ENCODE measurements at regions of chr3 and their contacts with region 1.

Region 1: GRCh38 chr3:58414538-58415197 is 19.0 kb downstream of the PDHB start:
- DNase-seq: peak; percentile 67
- ATAC-seq: peak; percentile 84
- H3K4me3 ChIP-seq: no peak overlapping the region
- H3K27ac ChIP-seq: no peak overlapping the region
- H3K4me1 ChIP-seq: peaks cover 4% of the 10 kb centered on the region
- H3K27me3 ChIP-seq: no peaks in the 10 kb centered on the region
- CTCF ChIP-seq: peak; percentile 84
- POLR2A ChIP-seq: no peak
- RAD21 ChIP-seq: peak; percentile 83

Region 2: DNA sequence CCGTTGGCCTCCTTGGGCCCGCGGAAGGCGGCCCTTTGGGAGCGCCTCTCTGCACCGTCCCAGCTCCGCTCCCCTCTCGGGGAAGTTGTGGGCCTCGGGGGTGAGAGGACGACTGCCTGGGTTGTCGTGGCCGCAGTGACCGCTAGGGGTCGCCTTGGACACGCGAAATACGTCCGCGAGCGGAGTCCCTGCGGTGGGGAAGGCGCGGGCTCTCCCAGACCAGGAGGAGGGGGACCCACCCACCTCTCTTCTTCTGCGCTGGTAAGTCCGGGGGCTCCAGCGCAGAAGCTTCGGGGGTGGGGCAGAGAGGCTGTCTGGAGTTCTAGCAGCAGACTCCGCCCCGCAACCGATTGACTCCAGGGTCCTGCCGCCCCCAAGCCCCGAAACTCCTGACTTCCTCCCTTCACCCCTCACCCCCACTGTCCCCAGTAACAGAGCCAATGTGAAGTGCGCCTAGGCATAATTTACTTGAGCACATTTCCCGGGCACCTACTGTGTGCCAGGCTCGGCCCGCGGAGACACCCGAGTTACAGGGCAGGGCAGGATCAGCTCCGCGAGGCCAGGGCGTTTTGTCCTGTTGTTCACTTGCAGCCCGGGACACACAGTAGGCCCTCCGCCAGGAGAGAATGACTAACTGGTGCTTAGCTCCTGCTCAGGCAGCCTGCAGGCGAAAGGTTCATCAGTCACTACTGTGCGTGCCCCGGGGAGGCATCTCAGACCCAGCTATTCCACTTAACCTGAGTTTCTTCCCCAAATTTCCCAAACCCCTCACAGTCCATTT is 236.7 kb before region 1 on chr3:
- CTCF ChIA-PET with region 1: no interaction called
- POLR2A ChIA-PET with region 1: no interaction called
- dilution Hi-C with region 1: no loop called
- in situ Hi-C with region 1: loop called (anchors 25 kb)
- intact Hi-C with region 1: no loop called
- DNase-seq: peak; percentile 69
- ATAC-seq: peak; percentile 92
- H3K4me3 ChIP-seq: peak overlapping the region; percentile 24
- H3K27ac ChIP-seq: no peak overlapping the region
- H3K4me1 ChIP-seq: peaks cover 7% of the 10 kb centered on the region
- H3K27me3 ChIP-seq: peaks cover 8% of the 10 kb centered on the region; the same call in 1 of the 2 replicates
- CTCF ChIP-seq: peak; percentile 87
- POLR2A ChIP-seq: no peak
- RAD21 ChIP-seq: peak; percentile 71

Region 3: GRCh38 chr3:58188173-58188564 is 226.5 kb before region 1 on chr3:
- CTCF ChIA-PET with region 1: no interaction called
- POLR2A ChIA-PET with region 1: no interaction called
- dilution Hi-C with region 1: no loop called
- in situ Hi-C with region 1: loop called (anchors 25 kb)
- intact Hi-C with region 1: loop called (anchors 5 kb)
- DNase-seq: no peak
- ATAC-seq: no peak; the same call in 1 of the 2 replicates
- H3K4me3 ChIP-seq: no peak overlapping the region
- H3K27ac ChIP-seq: no peak overlapping the region
- H3K4me1 ChIP-seq: no peaks in the 10 kb centered on the region
- H3K27me3 ChIP-seq: peaks cover 6% of the 10 kb centered on the region
- CTCF ChIP-seq: no peak
- POLR2A ChIP-seq: no peak
- RAD21 ChIP-seq: no peak

Region 4: DNA sequence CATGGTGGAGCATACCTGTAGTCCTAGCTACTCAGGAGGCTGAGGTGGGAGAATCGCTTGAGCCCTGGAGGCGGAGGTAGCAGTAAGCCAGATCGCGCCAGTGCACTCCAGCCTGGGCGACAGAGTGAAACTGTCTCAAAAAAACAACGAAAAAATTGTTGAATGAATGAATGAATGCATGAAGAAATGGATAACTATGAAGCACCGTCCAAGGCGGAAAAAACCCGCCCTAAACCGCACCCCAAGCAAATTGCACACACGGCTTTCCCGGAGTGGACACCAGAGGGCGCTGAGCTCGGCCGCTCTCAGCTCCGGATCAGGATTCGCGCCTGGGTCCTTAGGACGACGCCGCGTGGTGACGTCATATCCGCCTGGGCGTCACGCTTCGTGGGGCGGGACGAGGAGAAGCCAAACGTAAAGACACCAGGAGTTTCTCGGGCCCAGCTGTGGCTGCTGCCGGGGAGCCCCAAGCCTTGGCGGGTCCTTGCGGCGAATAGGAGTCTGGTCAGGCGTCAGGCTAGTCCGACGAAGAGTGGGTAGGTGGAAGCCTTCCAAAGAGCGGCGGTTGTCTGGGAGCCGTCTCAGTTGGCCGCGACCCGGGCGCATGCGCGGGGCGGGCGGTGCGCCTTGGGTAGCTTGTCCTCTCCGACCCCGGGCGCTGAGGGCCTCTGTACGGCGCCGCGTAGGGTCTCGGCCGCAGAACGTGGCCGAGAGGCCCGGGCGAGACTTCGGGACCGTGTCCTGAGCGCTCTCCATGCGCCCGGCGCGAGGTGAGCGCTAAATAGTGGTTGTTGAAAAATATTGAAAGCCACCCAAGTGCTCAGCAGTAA is 108.6 kb before region 1 on chr3 and contains the starts of genes HTD2 and RPP14:
- CTCF ChIA-PET with region 1: interaction called, 7 read pairs
- POLR2A ChIA-PET with region 1: no interaction called
- dilution Hi-C with region 1: no loop called
- in situ Hi-C with region 1: no loop called
- intact Hi-C with region 1: loop called (anchors 1 kb)
- DNase-seq: peak; percentile 97
- ATAC-seq: peak; percentile 92
- H3K4me3 ChIP-seq: peak within 1 kb of the TSS; percentile 74
- H3K27ac ChIP-seq: peak within 1 kb of the TSS; percentile 94
- H3K4me1 ChIP-seq: peaks cover 6% of the 10 kb centered on the region
- H3K27me3 ChIP-seq: peaks cover 9% of the 10 kb centered on the region
- CTCF ChIP-seq: peak; percentile 98
- POLR2A ChIP-seq: peak; percentile 92
- RAD21 ChIP-seq: peak; percentile 42
- total RNA-seq, gene HTD2: 11.4 and 13.3 TPM in 2 replicates
- total RNA-seq, gene RPP14: 6.6 and 11.9 TPM in 2 replicates

Region 5: GRCh38 chr3:58324391-58325390 is 90.0 kb before region 1 on chr3:
- CTCF ChIA-PET with region 1: interaction called, 7 read pairs
- POLR2A ChIA-PET with region 1: no interaction called
- dilution Hi-C with region 1: no loop called
- in situ Hi-C with region 1: no loop called
- intact Hi-C with region 1: loop called (anchors 1 kb)
- DNase-seq: peak; percentile 10
- ATAC-seq: peak; percentile 13
- H3K4me3 ChIP-seq: no peak overlapping the region
- H3K27ac ChIP-seq: peak overlapping the region; percentile 34; the same call in 1 of the 2 replicates
- H3K4me1 ChIP-seq: peaks cover 13% of the 10 kb centered on the region
- H3K27me3 ChIP-seq: no peaks in the 10 kb centered on the region
- CTCF ChIP-seq: no peak
- POLR2A ChIP-seq: no peak
- RAD21 ChIP-seq: no peak

Region 6: DNA sequence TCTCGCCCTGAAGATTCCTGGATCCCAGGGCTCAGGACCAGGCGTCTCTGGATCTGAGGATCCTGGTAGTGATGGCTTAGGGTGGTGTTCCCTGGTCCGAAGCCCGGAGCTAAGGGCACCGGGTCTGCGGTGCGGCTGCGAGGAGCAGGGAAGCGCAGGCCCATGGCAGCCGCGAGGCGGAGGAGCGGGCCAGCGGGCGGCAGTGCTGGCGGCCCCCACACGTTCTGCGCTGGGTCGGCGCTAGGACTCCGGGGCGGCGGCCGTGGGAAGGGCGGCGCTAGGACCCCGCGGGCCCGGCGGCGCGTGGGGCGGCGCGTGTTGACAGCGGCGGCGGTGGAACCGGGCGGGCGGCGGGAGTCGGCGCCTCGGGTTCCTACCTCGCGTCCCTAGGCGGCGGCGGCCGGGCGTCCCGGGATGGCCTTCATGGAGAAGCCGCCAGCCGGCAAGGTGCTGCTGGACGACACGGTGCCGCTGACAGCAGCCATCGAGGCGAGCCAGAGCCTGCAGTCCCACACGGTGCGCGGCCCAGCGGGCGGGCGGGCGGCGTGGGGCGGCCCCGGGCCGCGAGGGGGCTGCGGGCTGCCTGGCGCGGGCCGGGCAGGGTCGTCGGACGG is 82.0 kb before region 1 on chr3 and contains the start of gene PXK:
- CTCF ChIA-PET with region 1: interaction called, 7 read pairs
- POLR2A ChIA-PET with region 1: no interaction called
- dilution Hi-C with region 1: no loop called
- in situ Hi-C with region 1: loop called (anchors 5 kb)
- intact Hi-C with region 1: loop called (anchors 1 kb)
- DNase-seq: peak; percentile 70
- ATAC-seq: peak; percentile 87
- H3K4me3 ChIP-seq: peak within 1 kb of the TSS; percentile 91
- H3K27ac ChIP-seq: peak within 1 kb of the TSS; percentile 93
- H3K4me1 ChIP-seq: peaks cover 16% of the 10 kb centered on the region
- H3K27me3 ChIP-seq: no peaks in the 10 kb centered on the region
- CTCF ChIP-seq: peak; percentile 37
- POLR2A ChIP-seq: peak; percentile 32; the same call in 1 of the 2 replicates
- RAD21 ChIP-seq: peak; percentile 46
- total RNA-seq, gene PXK: 14.3 and 15.6 TPM in 2 replicates

Measured in IMR-90 (cell line).